ENCODE measurements at regions of chr1 and their contacts with region 1.

Region 1: DNA sequence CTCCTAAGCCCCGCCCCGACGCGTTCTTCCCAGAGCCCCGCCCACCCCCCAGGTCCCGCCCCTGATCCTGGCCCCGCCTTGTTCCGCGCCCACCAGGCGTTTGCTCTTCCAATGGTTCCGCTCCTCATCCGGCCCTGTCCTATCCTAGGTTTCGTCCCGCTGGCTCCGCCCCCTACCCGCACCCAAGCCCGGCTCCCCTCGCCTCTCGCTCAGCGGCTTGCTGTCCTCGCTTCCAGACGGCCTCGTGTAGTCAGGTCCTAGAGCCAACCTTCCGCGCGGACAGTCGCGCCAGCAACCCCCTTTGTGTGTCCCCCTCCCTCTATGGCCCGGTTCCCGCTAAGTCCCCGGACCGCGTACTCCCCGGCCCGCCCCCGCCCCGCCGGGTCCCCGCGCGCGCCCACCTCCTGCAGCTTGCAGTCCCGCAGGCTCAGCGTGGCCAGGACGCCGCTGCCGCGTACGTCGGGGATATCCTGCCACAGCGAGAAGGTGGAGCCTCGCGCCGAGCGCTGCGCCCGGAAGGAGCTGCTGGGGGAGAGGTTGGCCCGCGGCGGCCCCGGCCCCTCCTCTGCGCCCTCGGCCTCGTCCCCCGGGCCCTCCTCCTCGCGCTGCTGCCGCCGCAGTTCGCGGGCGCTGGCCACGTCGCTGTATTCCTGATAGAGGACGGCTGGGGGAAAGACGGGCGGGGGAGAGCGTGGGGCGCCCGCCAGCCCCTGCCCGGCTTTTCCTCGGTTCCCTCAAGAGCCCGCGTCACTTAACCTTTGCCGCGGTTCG is 5.7 kb downstream of the ARHGEF19 start:
- DNase-seq: peak; percentile 97
- ATAC-seq: peak; percentile 94
- H3K4me3 Mint-ChIP-seq: peak overlapping the region; percentile 78
- H3K27ac Mint-ChIP-seq: peak overlapping the region; percentile 97
- H3K4me1 Mint-ChIP-seq: peaks cover 5% of the 10 kb centered on the region
- H3K27me3 Mint-ChIP-seq: no peaks in the 10 kb centered on the region

Region 2: DNA sequence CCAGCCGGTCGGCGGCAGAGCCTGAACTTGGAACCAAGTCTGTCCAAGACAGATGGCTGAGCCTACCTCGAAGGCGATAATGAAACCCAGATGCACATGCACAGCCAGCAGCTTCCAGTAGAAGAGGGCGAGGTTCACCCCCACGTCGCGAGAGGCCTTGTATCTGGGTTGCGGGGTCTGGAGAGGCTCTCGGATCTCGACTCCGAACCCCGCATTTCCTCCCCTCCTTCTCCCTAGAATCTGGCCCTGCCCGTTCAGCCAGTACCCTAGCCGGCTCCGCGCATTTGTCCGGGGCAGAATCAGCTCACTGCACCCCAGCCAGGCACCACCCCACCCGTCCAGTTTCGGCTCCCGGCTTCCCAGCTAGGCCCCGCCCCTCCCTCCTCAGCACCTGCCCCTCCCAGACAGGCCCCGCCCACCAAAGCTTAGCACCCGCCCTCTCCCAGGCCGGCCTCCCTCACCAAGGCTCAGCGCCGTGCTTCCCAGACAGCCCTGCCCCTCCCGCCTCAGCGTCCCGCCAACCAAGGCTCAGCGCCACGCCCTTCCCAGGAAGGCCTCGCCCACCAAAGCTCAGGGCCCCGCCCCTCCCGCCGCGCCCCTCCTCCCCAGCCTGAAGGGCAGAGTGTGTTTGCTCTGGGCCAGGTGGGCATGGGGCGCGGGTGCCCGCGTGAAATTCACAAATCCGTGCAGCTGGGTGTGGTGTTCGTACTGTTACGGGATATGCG is 10.5 kb after region 1 on chr1:
- CTCF ChIA-PET with region 1: interaction called, 21 read pairs
- DNase-seq: peak; percentile 98
- ATAC-seq: peak; percentile 97
- H3K4me3 Mint-ChIP-seq: peak overlapping the region; percentile 85
- H3K27ac Mint-ChIP-seq: peak overlapping the region; percentile 87
- H3K4me1 Mint-ChIP-seq: peaks cover 24% of the 10 kb centered on the region
- H3K27me3 Mint-ChIP-seq: peaks cover 11% of the 10 kb centered on the region

Region 3: DNA sequence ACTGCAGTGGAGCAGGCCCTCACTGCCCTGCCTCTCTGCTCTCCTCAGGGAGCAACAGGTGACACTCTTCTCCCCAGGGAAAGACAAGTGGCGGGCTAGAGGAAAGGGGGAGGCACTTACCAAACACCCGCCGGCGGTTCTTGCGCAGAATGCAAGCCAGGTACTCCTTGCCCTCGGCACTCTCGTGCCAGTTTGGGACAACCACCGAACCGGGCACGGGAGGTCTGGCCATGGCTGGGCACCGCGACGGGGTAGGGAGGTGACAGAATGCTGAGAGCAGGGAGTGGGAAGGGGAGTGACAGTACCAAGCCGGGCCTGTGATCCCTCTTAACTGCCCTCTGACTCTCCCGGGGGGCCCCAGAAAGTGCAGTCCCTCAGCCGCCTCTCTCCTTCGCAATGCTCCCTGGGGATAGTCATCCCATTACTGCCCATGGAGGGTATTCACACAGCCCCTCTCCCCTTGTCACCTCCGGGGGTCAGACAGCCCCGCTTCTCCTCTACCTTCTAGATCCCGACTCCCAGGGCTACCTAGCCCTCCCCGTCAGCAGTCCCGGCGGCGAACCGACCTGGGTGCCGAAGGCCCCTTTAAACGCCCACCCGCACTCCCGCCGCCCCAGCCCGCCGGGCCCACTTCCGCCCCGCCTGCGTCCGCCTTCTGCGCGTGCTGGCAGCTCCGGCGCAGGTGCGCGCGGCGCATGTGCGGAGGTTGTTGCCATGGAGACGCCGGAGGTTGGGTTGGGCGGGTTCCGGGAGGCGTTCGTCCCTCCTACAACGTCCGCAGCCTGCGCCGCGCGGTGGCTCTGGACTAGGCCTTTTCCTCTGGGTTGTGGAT is 30.0 kb after region 1 on chr1 and contains the start of gene CPLANE2:
- CTCF ChIA-PET with region 1: interaction called, 13 read pairs
- DNase-seq: peak; percentile 97
- ATAC-seq: peak; percentile 94
- H3K4me3 Mint-ChIP-seq: peak within 1 kb of the TSS; percentile 79
- H3K27ac Mint-ChIP-seq: peak within 1 kb of the TSS; percentile 86
- H3K4me1 Mint-ChIP-seq: peaks cover 34% of the 10 kb centered on the region
- H3K27me3 Mint-ChIP-seq: no peaks in the 10 kb centered on the region
- total RNA-seq, gene CPLANE2: 5.9 to 6.4 TPM

Region 4: GRCh38 chr1:16243936-16244649 is 37.4 kb after region 1 on chr1:
- CTCF ChIA-PET with region 1: interaction called, 16 read pairs
- DNase-seq: peak; percentile 85
- ATAC-seq: peak; percentile 84
- H3K4me3 Mint-ChIP-seq: no peak overlapping the region
- H3K27ac Mint-ChIP-seq: no peak overlapping the region
- H3K4me1 Mint-ChIP-seq: peaks cover 10% of the 10 kb centered on the region
- H3K27me3 Mint-ChIP-seq: no peaks in the 10 kb centered on the region

Region 5: GRCh38 chr1:16366722-16367257 is 160.1 kb after region 1 on chr1 and contains the start of gene SZRD1:
- CTCF ChIA-PET with region 1: interaction called, 14 read pairs
- DNase-seq: peak; percentile 98
- ATAC-seq: peak; percentile 89
- H3K4me3 Mint-ChIP-seq: peak within 1 kb of the TSS; percentile 99
- H3K27ac Mint-ChIP-seq: peak within 1 kb of the TSS; percentile 99
- H3K4me1 Mint-ChIP-seq: peaks cover 42% of the 10 kb centered on the region
- H3K27me3 Mint-ChIP-seq: no peaks in the 10 kb centered on the region
- total RNA-seq, gene SZRD1: 161 to 189 TPM